ENCODE measurements at regions of chr9 and their contacts with region 1.

Region 1: DNA sequence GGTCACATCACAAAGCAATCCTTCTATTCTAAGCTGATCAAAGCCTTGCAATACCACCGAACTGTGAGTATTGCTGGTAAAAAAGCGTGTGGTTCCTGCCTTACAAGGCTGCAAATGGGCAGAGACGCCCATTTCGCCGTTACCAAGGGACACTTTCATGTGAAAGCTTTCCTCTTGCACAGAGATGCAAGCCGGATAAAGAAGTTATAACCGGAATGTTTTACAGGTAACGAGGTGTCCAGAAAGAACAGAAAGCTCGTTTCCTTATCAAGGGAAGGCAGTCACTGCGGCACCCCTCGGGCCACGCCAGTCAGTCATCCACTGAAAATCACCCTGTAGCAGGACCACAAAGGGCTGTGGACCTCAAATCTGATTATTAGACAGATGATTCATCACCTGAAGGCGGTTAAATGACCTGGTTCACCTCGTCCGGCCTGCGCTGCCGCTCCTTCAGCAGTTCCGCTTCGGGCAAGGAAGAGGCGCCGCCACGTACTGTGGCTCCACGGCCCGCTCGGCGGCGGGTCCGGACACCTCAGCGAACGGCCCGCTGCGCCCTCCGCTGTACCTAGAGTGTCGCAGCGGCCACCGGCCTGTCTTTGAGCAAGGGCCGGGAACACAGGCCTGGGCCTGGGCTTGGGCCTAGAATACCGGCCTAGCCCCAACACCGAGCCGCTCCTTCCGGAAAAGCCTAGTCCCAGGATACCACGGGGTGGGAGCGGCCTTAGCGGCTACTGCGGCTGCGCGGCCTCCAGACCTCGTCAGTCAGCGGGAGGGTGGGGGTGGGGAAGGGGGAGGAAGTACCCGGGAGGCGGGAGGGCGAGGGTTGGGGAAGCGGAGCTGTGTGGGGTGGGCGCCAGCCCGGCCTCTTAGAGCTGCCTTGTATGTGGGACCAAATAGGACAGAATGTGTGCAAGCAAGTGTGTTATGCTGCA is at the start of gene KLHL9:
- DNase-seq: peak; percentile 73
- ATAC-seq: peak; percentile 89
- H3K4me3 ChIP-seq: peak within 1 kb of the TSS; percentile 82
- H3K27ac ChIP-seq: peak within 1 kb of the TSS; percentile 91
- H3K4me1 ChIP-seq: peaks cover 3% of the 10 kb centered on the region
- H3K27me3 ChIP-seq: no peaks in the 10 kb centered on the region
- CTCF ChIP-seq: no peak
- EP300 ChIP-seq: no peak
- POLR2A ChIP-seq: peak; percentile 91
- RAD21 ChIP-seq: no peak
- polyA plus RNA-seq, gene KLHL9: 3.8 to 5.8 TPM

Region 2: GRCh38 chr9:21252721-21253547 is 82.0 kb before region 1 on chr9:
- CTCF ChIA-PET with region 1: interaction called, 5 read pairs
- POLR2A ChIA-PET with region 1: no interaction called
- RAD21 ChIA-PET with region 1: no interaction called
- SMC1A ChIA-PET with region 1: interaction called, 10 read pairs
- in situ Hi-C with region 1: no loop called
- intact Hi-C with region 1: no loop called
- DNase-seq: no peak
- ATAC-seq: peak; percentile 91
- H3K4me3 ChIP-seq: no peak overlapping the region
- H3K27ac ChIP-seq: no peak overlapping the region
- H3K4me1 ChIP-seq: no peaks in the 10 kb centered on the region
- H3K27me3 ChIP-seq: no peaks in the 10 kb centered on the region; a peak in 3 of 4 replicates
- CTCF ChIP-seq: peak; percentile 60 to 63 (median 62)
- EP300 ChIP-seq: no peak
- POLR2A ChIP-seq: no peak
- RAD21 ChIP-seq: peak; percentile 62

Region 3: GRCh38 chr9:21381448-21382339 is 46.7 kb after region 1 on chr9:
- CTCF ChIA-PET with region 1: interaction called, 65 read pairs
- POLR2A ChIA-PET with region 1: interaction called, 12 read pairs
- RAD21 ChIA-PET with region 1: interaction called, 37 read pairs
- SMC1A ChIA-PET with region 1: interaction called, 205 read pairs
- in situ Hi-C with region 1: no loop called
- intact Hi-C with region 1: loop called (anchors 1 kb)
- DNase-seq: peak; percentile 94
- ATAC-seq: peak; percentile 92
- H3K4me3 ChIP-seq: peak overlapping the region; percentile 25; the same call in 1 of the 2 replicates
- H3K27ac ChIP-seq: peak overlapping the region; percentile 69
- H3K4me1 ChIP-seq: peaks cover 22% of the 10 kb centered on the region
- H3K27me3 ChIP-seq: no peaks in the 10 kb centered on the region
- CTCF ChIP-seq: no peak
- EP300 ChIP-seq: peak; percentile 92 to 93
- POLR2A ChIP-seq: no peak
- RAD21 ChIP-seq: 0 out of 2 replicates have a peak, but pooled peaks have one; percentile 6

Region 4: GRCh38 chr9:21402386-21403251 is 67.7 kb after region 1 on chr9:
- CTCF ChIA-PET with region 1: interaction called, 30 read pairs
- POLR2A ChIA-PET with region 1: interaction called, 4 read pairs
- RAD21 ChIA-PET with region 1: interaction called, 29 read pairs
- SMC1A ChIA-PET with region 1: interaction called, 30 read pairs
- in situ Hi-C with region 1: no loop called
- intact Hi-C with region 1: no loop called
- DNase-seq: no peak
- ATAC-seq: peak; percentile 83
- H3K4me3 ChIP-seq: peak overlapping the region; percentile 53; the same call in 1 of the 2 replicates
- H3K27ac ChIP-seq: no peak overlapping the region
- H3K4me1 ChIP-seq: no peaks in the 10 kb centered on the region
- H3K27me3 ChIP-seq: peaks cover 0 to 2% of the 10 kb centered on the region in 2 experiments; a peak in 2 of 4 replicates
- CTCF ChIP-seq: peak; percentile 2 to 32 (median 16); a peak in 2 of 6 replicates
- EP300 ChIP-seq: no peak
- POLR2A ChIP-seq: no peak
- RAD21 ChIP-seq: no peak

Region 5: DNA sequence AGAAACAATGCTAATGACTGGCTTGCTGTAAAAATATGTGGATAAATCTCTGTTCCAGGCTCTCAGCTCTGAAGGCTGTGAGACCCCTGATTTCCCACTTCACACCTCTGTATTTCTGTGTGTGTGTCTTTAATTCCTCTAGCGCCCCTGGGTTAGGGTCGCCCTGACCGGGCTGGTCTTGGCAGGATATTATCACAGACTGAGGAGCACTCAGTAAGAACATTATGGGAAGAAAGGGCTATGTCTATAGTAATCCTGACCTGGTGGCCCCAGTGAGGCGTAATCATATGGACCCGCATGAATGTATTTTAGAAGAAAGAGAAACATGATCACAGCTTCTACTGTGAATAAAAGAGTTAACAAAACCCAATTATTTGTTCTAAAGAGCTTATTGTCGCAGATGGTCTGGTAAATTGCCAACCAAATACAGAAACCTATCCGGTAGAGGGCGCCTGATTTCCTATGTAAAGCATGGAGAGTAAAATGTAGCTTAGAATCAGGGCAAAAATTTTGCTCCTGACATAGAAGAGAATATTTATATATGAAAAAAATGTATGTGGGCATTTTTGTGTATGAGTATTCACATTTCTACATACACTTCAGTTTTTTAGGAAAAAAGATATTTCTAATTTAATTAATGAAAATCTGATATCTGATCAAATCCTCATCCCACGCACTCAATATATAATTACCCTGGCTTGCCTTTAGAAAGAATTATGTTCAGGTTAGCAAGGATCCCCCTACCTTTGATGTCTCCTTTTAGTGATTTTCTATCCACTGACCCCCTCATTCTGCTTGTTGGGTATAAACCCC is 99.4 kb after region 1 on chr9:
- CTCF ChIA-PET with region 1: interaction called, 47 read pairs
- POLR2A ChIA-PET with region 1: interaction called, 3 read pairs
- RAD21 ChIA-PET with region 1: interaction called, 13 read pairs
- SMC1A ChIA-PET with region 1: interaction called, 24 read pairs
- in situ Hi-C with region 1: no loop called
- intact Hi-C with region 1: no loop called
- DNase-seq: no peak
- ATAC-seq: peak; percentile 47; the same call in 1 of the 3 replicates
- H3K4me3 ChIP-seq: no peak overlapping the region
- H3K27ac ChIP-seq: no peak overlapping the region
- H3K4me1 ChIP-seq: peaks cover 6% of the 10 kb centered on the region; the same call in 1 of the 2 replicates
- H3K27me3 ChIP-seq: no peaks in the 10 kb centered on the region
- CTCF ChIP-seq: peak; percentile 46 to 51 (median 49); a peak in 5 of 6 replicates
- EP300 ChIP-seq: no peak
- POLR2A ChIP-seq: no peak
- RAD21 ChIP-seq: peak; percentile 38